Activated CD8-positive, alpha-beta T cell treated with anti-CD3 and anti-CD28 coated beads for 36 hours (primary cell): ENCODE measurements at regions of chr4 and their contacts with region 1.

Region 1: GRCh38 chr4:153488006-153488891 is 22.1 kb downstream of the TMEM131L start:
- DNase-seq: peak; percentile 91
- ATAC-seq: peak; percentile 64
- H3K4me3 Mint-ChIP-seq: peak overlapping the region; percentile 69
- H3K27ac Mint-ChIP-seq: peak overlapping the region; percentile 95
- H3K4me1 Mint-ChIP-seq: peaks cover 64% of the 10 kb centered on the region
- H3K27me3 Mint-ChIP-seq: no peaks in the 10 kb centered on the region
- CTCF ChIP-seq: no peak

Region 2: DNA sequence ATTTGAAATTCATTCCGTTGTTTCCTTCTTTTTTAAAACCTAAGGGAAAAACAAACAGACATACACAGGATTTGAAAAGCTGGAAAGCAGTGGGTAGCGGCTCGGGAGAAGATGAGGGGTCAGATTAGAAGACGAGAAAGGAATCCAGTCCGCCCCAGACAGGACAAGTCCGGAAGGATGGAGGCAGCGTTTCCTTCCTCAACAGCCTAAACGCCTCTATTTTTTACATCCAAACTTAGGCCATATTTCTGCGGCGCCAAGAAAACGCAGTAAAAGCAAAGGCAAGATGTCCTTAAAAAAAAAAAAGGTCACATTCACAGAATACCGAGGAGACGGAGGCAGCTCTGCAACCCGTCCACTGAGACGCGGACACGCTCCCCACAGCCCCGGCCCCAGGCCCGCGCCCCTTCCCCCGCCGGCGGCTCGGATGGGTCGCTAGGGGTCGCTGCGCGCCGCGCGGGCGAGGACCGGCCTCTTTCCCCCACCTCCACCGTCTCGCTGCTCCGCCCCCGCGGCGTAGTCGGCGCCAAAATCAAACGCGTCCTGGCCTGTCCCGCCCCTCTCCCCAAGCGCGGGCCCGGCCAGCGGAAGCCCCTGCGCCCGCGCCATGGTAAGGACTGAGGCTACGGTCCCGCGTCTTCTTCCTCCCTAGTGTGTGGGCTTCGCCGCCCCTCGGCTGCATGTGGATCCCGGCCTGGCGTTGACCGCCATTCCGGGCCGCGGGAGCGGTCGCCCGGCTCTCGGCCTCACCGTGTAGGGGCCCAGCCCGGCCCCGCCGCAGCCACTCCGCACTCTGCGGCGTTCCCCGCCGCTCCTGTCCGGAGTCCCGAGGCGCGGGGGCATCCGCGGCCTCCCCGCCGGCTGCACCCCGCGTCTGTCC is 143.9 kb before region 1 on chr4 and contains the start of gene MND1:
- CTCF ChIA-PET with region 1: interaction called, 4 read pairs
- POLR2A ChIA-PET with region 1: no interaction called
- intact Hi-C with region 1: loop called (anchors 5 kb)
- DNase-seq: peak; percentile 94
- ATAC-seq: peak; percentile 94
- H3K4me3 Mint-ChIP-seq: peak within 1 kb of the TSS; percentile 93
- H3K27ac Mint-ChIP-seq: peak within 1 kb of the TSS; percentile 87
- H3K4me1 Mint-ChIP-seq: peaks cover 24% of the 10 kb centered on the region
- H3K27me3 Mint-ChIP-seq: peaks cover 12% of the 10 kb centered on the region
- CTCF ChIP-seq: peak; percentile 100
- total RNA-seq, gene MND1: 48.0 to 50.0 TPM

Region 3: DNA sequence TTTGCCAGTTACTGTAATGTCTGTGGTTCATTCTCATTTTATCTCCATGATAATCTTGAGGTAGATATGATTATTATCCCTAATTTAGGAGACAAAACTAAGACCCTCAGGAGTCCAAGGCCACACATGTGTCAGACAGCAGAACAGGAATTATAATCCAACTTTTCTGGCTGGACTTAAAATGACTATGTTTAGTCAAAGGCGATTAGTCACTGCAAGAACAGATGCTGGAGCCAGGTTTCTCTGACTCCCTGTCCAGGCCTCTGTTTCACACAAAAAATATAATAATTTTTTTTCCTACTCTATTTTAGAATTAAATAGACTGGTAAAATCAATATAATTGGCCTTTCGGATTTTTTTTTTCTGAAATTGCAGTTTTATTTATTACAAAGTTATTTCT is 78.8 kb before region 1 on chr4:
- CTCF ChIA-PET with region 1: no interaction called
- POLR2A ChIA-PET with region 1: no interaction called
- intact Hi-C with region 1: no loop called
- DNase-seq: no peak
- ATAC-seq: no peak
- H3K4me3 Mint-ChIP-seq: no peak overlapping the region
- H3K27ac Mint-ChIP-seq: no peak overlapping the region
- H3K4me1 Mint-ChIP-seq: no peaks in the 10 kb centered on the region
- H3K27me3 Mint-ChIP-seq: no peaks in the 10 kb centered on the region
- CTCF ChIP-seq: no peak

Region 4: GRCh38 chr4:153471691-153472080 is 16.6 kb before region 1 on chr4:
- CTCF ChIA-PET with region 1: interaction called, 24 read pairs
- POLR2A ChIA-PET with region 1: interaction called, 36 read pairs
- intact Hi-C with region 1: loop called (anchors 2 kb)
- DNase-seq: peak; percentile 71
- ATAC-seq: peak; percentile 45
- H3K4me3 Mint-ChIP-seq: peak overlapping the region; percentile 98
- H3K27ac Mint-ChIP-seq: peak overlapping the region; percentile 84
- H3K4me1 Mint-ChIP-seq: peaks cover 62% of the 10 kb centered on the region
- H3K27me3 Mint-ChIP-seq: no peaks in the 10 kb centered on the region
- CTCF ChIP-seq: no peak

Region 5: DNA sequence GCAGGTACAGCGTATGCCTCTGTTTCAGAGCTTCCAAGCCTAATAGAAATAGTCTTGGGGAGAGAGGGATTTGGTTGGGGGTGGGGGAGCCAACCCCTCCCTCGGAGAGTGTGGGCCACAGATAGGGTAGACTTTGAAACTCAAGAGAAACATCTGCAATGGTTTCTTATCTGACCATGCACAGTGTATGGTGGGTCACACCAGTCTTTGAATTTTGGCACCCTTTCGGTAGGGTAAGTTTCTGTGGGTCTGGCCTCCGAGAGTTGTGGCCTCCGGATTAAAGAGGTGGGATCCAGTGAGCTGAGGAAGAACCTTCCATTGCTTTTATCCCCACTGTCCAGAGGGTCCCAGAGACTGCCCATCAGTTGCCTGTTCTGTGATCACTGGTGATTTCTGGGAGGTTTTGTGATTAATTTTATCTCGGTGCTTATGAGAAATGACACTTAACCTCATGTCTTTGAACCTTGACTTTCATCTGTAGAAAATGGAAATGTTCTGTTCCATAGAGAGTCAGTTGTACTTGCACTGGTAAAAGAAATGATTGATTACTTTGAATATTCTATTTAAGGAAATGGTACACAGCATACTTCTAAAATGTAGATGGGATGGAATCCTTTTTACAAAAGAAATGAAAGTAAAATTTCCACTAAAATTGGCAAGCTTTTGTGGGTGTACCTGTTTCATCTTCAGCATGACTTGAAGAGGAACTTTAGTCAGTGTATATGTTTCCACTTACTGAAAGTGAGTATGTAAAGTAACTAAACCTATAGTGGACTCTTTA is 40.6 kb after region 1 on chr4:
- CTCF ChIA-PET with region 1: interaction called, 6 read pairs
- POLR2A ChIA-PET with region 1: interaction called, 16 read pairs
- intact Hi-C with region 1: loop called (anchors 2 kb)
- DNase-seq: no peak
- ATAC-seq: peak; percentile 73
- H3K4me3 Mint-ChIP-seq: peak overlapping the region; percentile 50
- H3K27ac Mint-ChIP-seq: peak overlapping the region; percentile 96
- H3K4me1 Mint-ChIP-seq: peaks cover 87% of the 10 kb centered on the region
- H3K27me3 Mint-ChIP-seq: no peaks in the 10 kb centered on the region
- CTCF ChIP-seq: no peak

Region 6: GRCh38 chr4:153573881-153574802 is 85.9 kb after region 1 on chr4:
- CTCF ChIA-PET with region 1: interaction called, 13 read pairs
- POLR2A ChIA-PET with region 1: interaction called, 6 read pairs
- intact Hi-C with region 1: loop called (anchors 2 kb)
- DNase-seq: peak; percentile 80
- ATAC-seq: peak; percentile 81
- H3K4me3 Mint-ChIP-seq: no peak overlapping the region
- H3K27ac Mint-ChIP-seq: peak overlapping the region; percentile 80
- H3K4me1 Mint-ChIP-seq: peaks cover 72% of the 10 kb centered on the region
- H3K27me3 Mint-ChIP-seq: no peaks in the 10 kb centered on the region
- CTCF ChIP-seq: peak; percentile 66